ENCODE measurements at regions of chr2 and their contacts with region 1.

Region 1: GRCh38 chr2:192162392-192163042 is 32.2 kb downstream of the TMEFF2 start:
- DNase-seq: peak; percentile 61
- ATAC-seq: peak; percentile 75
- H3K4me3 Mint-ChIP-seq: no peak overlapping the region
- H3K27ac Mint-ChIP-seq: no peak overlapping the region
- H3K4me1 Mint-ChIP-seq: peaks cover 18% of the 10 kb centered on the region
- H3K27me3 Mint-ChIP-seq: no peaks in the 10 kb centered on the region
- CTCF ChIP-seq: peak; percentile 77

Region 2: GRCh38 chr2:191453761-191454160 is 708.8 kb before region 1 on chr2:
- CTCF ChIA-PET with region 1: no interaction called
- POLR2A ChIA-PET with region 1: no interaction called
- DNase-seq: no peak
- ATAC-seq: no peak
- H3K4me3 Mint-ChIP-seq: no peak overlapping the region
- H3K27ac Mint-ChIP-seq: no peak overlapping the region
- H3K4me1 Mint-ChIP-seq: no peaks in the 10 kb centered on the region
- H3K27me3 Mint-ChIP-seq: no peaks in the 10 kb centered on the region
- CTCF ChIP-seq: no peak

Region 3: DNA sequence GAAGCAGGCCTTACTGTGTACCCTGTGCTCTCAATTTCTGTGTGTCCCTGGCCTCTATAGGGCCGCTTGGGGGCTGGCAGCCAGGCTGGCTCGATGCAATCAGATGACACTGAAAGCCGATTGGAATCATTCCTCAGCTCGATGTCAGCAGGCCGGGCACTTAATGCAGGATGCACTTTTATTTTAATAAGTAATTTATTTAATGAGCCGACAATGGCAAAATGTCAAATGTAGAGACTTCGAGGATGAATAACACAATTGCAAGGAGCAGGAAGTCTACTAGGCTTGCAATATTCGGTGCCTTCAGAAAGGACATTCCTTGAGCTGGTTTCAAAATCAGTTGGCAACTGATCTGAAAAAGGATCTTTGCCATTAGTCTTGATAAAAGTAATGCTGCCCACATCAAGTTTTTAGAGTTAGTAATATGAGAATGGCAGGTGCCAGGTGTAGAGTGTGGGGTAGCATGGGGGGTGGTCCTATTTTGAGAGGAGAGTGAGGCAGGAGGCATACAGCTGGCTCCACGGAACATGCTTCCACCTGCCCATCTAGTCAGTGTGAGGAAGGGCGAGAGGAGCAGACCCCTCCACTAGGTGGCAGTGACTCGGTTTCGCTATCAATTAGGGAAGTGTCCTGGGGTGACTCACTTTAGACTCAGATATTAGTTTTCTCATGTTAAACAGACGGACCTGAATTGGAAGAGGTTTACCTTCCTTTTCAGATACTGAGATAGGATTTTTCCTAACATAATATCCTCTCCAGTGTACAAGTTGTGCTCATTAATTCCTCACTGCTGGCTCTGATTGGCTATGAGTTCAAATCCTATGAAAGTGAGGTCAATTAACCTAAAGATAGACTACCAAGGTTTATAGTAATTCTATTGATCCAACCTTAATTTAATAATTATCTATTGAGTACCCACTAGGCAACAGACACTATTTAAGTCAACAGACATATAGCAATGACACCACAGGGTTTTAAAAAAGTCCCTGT is 403.7 kb before region 1 on chr2:
- CTCF ChIA-PET with region 1: interaction called, 10 read pairs
- POLR2A ChIA-PET with region 1: no interaction called
- DNase-seq: peak; percentile 66
- ATAC-seq: peak; percentile 100
- H3K4me3 Mint-ChIP-seq: no peak overlapping the region
- H3K27ac Mint-ChIP-seq: peak overlapping the region; percentile 24; the same call in 1 of the 2 replicates
- H3K4me1 Mint-ChIP-seq: peaks cover 24% of the 10 kb centered on the region
- H3K27me3 Mint-ChIP-seq: no peaks in the 10 kb centered on the region
- CTCF ChIP-seq: peak; percentile 57

Region 4: GRCh38 chr2:191835539-191836350 is 326.8 kb before region 1 on chr2:
- CTCF ChIA-PET with region 1: interaction called, 15 read pairs
- POLR2A ChIA-PET with region 1: no interaction called
- DNase-seq: peak; percentile 58
- ATAC-seq: peak; percentile 90
- H3K4me3 Mint-ChIP-seq: no peak overlapping the region
- H3K27ac Mint-ChIP-seq: no peak overlapping the region
- H3K4me1 Mint-ChIP-seq: peaks cover 24% of the 10 kb centered on the region
- H3K27me3 Mint-ChIP-seq: no peaks in the 10 kb centered on the region
- CTCF ChIP-seq: no peak

Region 5: DNA sequence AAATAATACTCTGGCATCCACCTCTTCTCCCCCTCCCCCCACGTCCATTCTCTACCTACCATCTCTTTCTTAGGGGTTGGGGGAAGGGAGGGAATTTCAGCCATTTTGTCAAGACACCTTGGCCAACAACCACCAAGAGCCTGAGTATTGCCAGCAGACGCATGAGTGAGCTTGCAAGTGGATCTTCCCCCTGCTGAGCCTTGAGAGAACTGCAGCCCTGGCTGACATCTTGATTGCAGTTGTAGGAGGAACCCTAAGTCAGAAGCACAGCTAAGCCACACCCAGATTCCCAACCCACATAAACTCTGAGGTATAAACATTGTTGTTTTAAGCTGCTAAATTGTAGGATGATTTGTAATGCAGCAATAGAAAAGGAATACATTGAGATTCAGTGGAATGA is 133.4 kb before region 1 on chr2:
- CTCF ChIA-PET with region 1: interaction called, 15 read pairs
- POLR2A ChIA-PET with region 1: no interaction called
- DNase-seq: peak; percentile 67
- ATAC-seq: peak; percentile 92
- H3K4me3 Mint-ChIP-seq: no peak overlapping the region
- H3K27ac Mint-ChIP-seq: no peak overlapping the region
- H3K4me1 Mint-ChIP-seq: peaks cover 39% of the 10 kb centered on the region
- H3K27me3 Mint-ChIP-seq: no peaks in the 10 kb centered on the region
- CTCF ChIP-seq: peak; percentile 41; the same call in 1 of the 2 replicates

Measured in WTC11 (cell line).